GM10248 (cell line): ENCODE measurements at regions of chr4 and their contacts with region 1.

Region 1: DNA sequence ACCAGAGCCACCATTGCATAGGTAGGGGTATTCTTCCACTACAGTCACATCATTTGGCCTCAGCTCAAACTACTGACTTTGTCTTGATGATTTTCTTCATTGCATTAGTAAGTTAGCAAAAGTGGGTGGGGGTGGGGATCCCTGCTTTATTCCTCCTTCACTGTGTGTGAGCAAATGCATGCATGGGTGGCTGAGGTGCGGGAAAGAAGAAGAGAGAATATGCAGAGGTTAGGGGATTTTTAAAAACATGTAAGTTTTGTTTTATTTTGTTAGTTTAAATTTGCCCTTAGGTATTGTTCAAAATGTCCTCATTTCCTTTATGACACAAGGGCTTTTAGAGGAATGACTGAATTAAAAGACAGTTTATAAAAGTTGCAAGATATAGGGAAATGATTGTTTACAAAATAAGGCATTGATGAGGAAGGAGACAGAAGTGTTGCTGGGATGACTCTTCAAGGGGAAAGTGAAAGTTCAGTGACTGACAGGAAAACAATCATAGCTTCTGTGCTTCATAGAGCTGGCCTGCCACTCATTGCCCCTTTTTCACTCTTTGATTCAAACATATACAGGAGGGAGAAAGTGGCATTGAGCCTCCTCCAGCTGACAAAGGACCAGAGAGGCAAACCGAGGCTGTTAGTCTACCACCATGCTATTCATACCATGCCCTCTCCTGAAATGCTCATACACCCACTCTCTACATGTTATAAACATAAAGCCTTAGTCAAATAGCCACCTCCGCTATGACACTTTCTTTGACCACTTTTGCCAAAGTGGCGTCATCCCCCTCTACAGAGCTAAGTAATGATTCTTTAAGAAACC is 79.4 kb upstream of the ATOH1 start:
- DNase-seq: peak; percentile 35
- CTCF ChIP-seq: no peak

Region 2: GRCh38 chr4:93764639-93765246 is 15.6 kb after region 1 on chr4:
- CTCF ChIA-PET with region 1: interaction called, 11 read pairs
- POLR2A ChIA-PET with region 1: no interaction called
- DNase-seq: peak; percentile 38
- CTCF ChIP-seq: peak; percentile 55